ENCODE measurements at regions of chr5 and their contacts with region 1.

Region 1: DNA sequence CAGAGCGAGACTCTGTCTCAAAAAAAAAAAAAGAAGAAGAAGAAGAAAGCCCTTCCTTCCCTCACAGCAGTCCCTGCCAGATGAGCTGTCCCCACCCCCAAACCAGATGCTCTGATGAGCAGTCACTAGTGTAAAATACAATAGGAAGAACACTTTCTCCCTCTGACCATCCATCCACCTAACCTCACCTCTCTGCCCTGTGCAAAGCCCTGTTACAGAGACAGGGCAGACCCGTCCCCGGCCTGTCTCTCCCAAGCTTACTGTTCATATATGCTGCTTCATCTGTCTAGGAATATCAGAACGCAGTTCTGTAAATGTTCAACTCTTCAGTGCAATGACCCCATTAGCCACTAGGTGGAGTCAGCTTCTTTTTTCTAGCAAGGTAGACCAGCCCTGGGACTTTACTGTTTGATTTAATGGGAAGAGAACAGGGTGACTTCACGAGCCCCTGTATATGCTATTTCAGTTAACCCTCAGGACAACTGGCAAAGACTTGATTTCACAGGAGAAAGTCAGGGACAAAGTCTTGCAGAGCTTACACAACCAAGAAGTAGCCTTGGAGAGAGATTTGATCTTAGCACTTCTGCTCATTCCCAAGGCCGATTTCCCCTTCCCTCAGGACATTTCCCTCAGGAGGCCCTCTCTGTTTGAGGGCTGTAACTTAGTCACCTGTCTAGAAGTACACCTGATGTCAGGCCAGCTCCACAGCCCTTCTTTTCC is 14.9 kb upstream of the FGFR4 start:
- DNase-seq: peak in 33 of 35 experiments; percentile 13 to 81 (median 51)
- ATAC-seq: peak; percentile 70 to 78 (median 78)
- H3K4me3 ChIP-seq: no peak overlapping the region
- H3K4me3 Mint-ChIP-seq: no peak overlapping the region
- H3K27ac ChIP-seq: no peak overlapping the region
- H3K27ac Mint-ChIP-seq: peak overlapping the region in 1 of 2 donors; percentile 0
- H3K4me1 ChIP-seq: peaks cover 0 to 7% of the 10 kb centered on the region in 2 experiments
- H3K4me1 Mint-ChIP-seq: peaks cover 4 to 10% (median 6%) of the 10 kb centered on the region in 3 donors
- H3K27me3 ChIP-seq: no peaks in the 10 kb centered on the region
- H3K27me3 Mint-ChIP-seq: no peaks in the 10 kb centered on the region

Region 2: DNA sequence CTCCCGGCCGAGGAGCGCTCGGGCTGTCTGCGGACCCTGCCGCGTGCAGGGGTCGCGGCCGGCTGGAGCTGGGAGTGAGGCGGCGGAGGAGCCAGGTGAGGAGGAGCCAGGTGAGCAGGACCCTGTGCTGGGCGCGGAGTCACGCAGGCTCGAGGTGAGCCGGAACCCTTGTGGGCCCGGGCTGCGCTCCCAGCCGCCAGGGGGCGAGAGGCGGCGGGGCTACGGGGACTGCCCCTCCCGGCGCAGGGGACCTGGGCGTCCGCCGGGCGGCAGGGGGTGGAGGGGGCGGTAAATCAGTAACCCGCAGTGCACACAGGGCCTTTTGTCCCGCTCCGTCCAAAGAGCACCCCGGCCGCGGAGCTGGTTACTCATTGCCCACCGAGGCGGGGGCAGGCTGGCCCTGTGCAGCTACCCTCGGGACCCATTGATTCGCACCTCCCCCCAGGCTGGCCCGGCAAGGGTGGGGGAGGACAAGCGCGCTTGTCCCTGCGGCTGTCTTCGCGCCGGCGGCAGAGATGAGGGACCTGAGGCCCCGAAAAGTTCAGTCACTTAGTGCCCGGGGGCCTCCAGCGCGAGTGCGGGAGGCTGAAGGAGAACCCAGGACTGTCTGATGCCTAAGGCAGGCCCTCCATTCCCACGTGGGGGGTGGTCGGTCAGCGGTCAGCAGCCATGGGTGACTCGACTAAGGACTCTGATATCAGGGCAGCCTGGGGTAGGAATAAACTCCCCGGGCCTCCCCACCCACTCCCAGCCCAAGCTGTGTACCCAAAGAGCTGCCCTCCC is 15.3 kb after region 1 on chr5:
- CTCF ChIA-PET with region 1: interaction called in 1 of 2 experiments, 18 read pairs
- POLR2A ChIA-PET with region 1: no interaction called
- DNase-seq: peak; percentile 30 to 79 (median 60)
- ATAC-seq: peak; percentile 84 to 86 (median 84)
- H3K4me3 ChIP-seq: peak overlapping the region; percentile 41 to 57
- H3K4me3 Mint-ChIP-seq: peak overlapping the region; percentile 24 to 72 (median 34)
- H3K27ac ChIP-seq: no peak overlapping the region
- H3K27ac Mint-ChIP-seq: no peak overlapping the region
- H3K4me1 ChIP-seq: peaks cover 4 to 18% of the 10 kb centered on the region in 2 experiments
- H3K4me1 Mint-ChIP-seq: peaks cover 13 to 14% (median 14%) of the 10 kb centered on the region in 3 donors
- H3K27me3 ChIP-seq: peaks cover 0 to 45% of the 10 kb centered on the region in 2 experiments
- H3K27me3 Mint-ChIP-seq: peaks cover 5 to 13% of the 10 kb centered on the region in 2 donors

Region 3: GRCh38 chr5:177142098-177142611 is 70.3 kb after region 1 on chr5:
- CTCF ChIA-PET with region 1: interaction called in 1 of 2 experiments, 12 read pairs
- POLR2A ChIA-PET with region 1: no interaction called
- DNase-seq: no peak
- ATAC-seq: no peak
- H3K4me3 ChIP-seq: no peak overlapping the region
- H3K4me3 Mint-ChIP-seq: peak overlapping the region in 1 of 3 donors; percentile 4
- H3K27ac ChIP-seq: no peak overlapping the region
- H3K27ac Mint-ChIP-seq: no peak overlapping the region
- H3K4me1 ChIP-seq: peaks cover 6 to 26% of the 10 kb centered on the region in 2 experiments
- H3K4me1 Mint-ChIP-seq: peaks cover 34 to 52% (median 49%) of the 10 kb centered on the region in 3 donors
- H3K27me3 ChIP-seq: no peaks in the 10 kb centered on the region
- H3K27me3 Mint-ChIP-seq: no peaks in the 10 kb centered on the region